ENCODE measurements at regions of chr2 and their contacts with region 1.

Region 1: GRCh38 chr2:69012310-69013141 is 453 bp upstream of the ANTXR1 start:
- DNase-seq: no peak
- H3K4me3 ChIP-seq: peak overlapping the region; percentile 83
- H3K27me3 ChIP-seq: no peaks in the 10 kb centered on the region
- CTCF ChIP-seq: peak; percentile 82

Region 2: GRCh38 chr2:68943581-68944568 is 68.7 kb before region 1 on chr2:
- CTCF ChIA-PET with region 1: interaction called, 22 read pairs
- POLR2A ChIA-PET with region 1: no interaction called
- DNase-seq: no peak
- H3K4me3 ChIP-seq: no peak overlapping the region
- H3K27me3 ChIP-seq: no peaks in the 10 kb centered on the region
- CTCF ChIP-seq: peak; percentile 79

Measured in BJ (cell line).